GM12878 (cell line): ENCODE measurements at regions of chr12 and their contacts with region 1.

Region 1: GRCh38 chr12:751192-751998 is 984 bp upstream of the WNK1 start:
- DNase-seq: peak; percentile 94
- ATAC-seq: peak; percentile 60
- H3K4me3 ChIP-seq: peak overlapping the region; percentile 75
- H3K27ac ChIP-seq: peak overlapping the region; percentile 79
- H3K4me1 ChIP-seq: no peaks in the 10 kb centered on the region; the same call in 1 of the 2 replicates
- H3K27me3 ChIP-seq: no peaks in the 10 kb centered on the region
- CTCF ChIP-seq: peak; percentile 73 to 84 (median 78)
- EP300 ChIP-seq: no peak
- POLR2A ChIP-seq: peak; percentile 89
- RAD21 ChIP-seq: peak; percentile 76

Region 2: GRCh38 chr12:622416-622815 is 129.0 kb before region 1 on chr12:
- CTCF ChIA-PET with region 1: interaction called, 6 read pairs
- POLR2A ChIA-PET with region 1: no interaction called
- RAD21 ChIA-PET with region 1: interaction called, 65 read pairs
- SMC1A ChIA-PET with region 1: interaction called, 71 read pairs
- in situ Hi-C with region 1: no loop called
- intact Hi-C with region 1: no loop called
- DNase-seq: no peak
- ATAC-seq: peak; percentile 49
- H3K4me3 ChIP-seq: no peak overlapping the region
- H3K27ac ChIP-seq: no peak overlapping the region
- H3K4me1 ChIP-seq: peaks cover 7% of the 10 kb centered on the region; the same call in 1 of the 2 replicates
- H3K27me3 ChIP-seq: no peaks in the 10 kb centered on the region
- CTCF ChIP-seq: no peak
- EP300 ChIP-seq: no peak
- POLR2A ChIP-seq: no peak
- RAD21 ChIP-seq: no peak

Region 3: GRCh38 chr12:642633-643474 is 108.5 kb before region 1 on chr12:
- CTCF ChIA-PET with region 1: interaction called, 3 read pairs
- POLR2A ChIA-PET with region 1: interaction called, 18 read pairs
- RAD21 ChIA-PET with region 1: interaction called, 24 read pairs
- SMC1A ChIA-PET with region 1: interaction called, 10 read pairs
- in situ Hi-C with region 1: no loop called
- intact Hi-C with region 1: no loop called
- DNase-seq: no peak
- ATAC-seq: peak; percentile 82
- H3K4me3 ChIP-seq: peak overlapping the region; percentile 82
- H3K27ac ChIP-seq: peak overlapping the region; percentile 86
- H3K4me1 ChIP-seq: peaks cover 57% of the 10 kb centered on the region
- H3K27me3 ChIP-seq: no peaks in the 10 kb centered on the region
- CTCF ChIP-seq: peak; percentile 20 to 68 (median 34)
- EP300 ChIP-seq: 0 out of 4 replicates have a peak, but pooled peaks of 1 of the 2 experiments have one; percentile 11
- POLR2A ChIP-seq: peak; percentile 83
- RAD21 ChIP-seq: peak; percentile 21

Region 4: GRCh38 chr12:674272-674781 is 77.1 kb before region 1 on chr12:
- CTCF ChIA-PET with region 1: interaction called, 123 read pairs
- POLR2A ChIA-PET with region 1: interaction called, 118 read pairs
- RAD21 ChIA-PET with region 1: interaction called, 396 read pairs
- SMC1A ChIA-PET with region 1: interaction called, 194 read pairs
- in situ Hi-C with region 1: loop called (anchors 5 kb)
- intact Hi-C with region 1: loop called (anchors 1 kb)
- DNase-seq: peak; percentile 100
- ATAC-seq: peak; percentile 84
- H3K4me3 ChIP-seq: peak overlapping the region; percentile 61; the same call in 1 of the 2 replicates
- H3K27ac ChIP-seq: peak overlapping the region; percentile 100
- H3K4me1 ChIP-seq: peaks cover 57% of the 10 kb centered on the region
- H3K27me3 ChIP-seq: no peaks in the 10 kb centered on the region
- CTCF ChIP-seq: no peak
- EP300 ChIP-seq: peak; percentile 81 to 88
- POLR2A ChIP-seq: peak; percentile 83
- RAD21 ChIP-seq: peak; percentile 16; the same call in 1 of the 2 replicates

Region 5: DNA sequence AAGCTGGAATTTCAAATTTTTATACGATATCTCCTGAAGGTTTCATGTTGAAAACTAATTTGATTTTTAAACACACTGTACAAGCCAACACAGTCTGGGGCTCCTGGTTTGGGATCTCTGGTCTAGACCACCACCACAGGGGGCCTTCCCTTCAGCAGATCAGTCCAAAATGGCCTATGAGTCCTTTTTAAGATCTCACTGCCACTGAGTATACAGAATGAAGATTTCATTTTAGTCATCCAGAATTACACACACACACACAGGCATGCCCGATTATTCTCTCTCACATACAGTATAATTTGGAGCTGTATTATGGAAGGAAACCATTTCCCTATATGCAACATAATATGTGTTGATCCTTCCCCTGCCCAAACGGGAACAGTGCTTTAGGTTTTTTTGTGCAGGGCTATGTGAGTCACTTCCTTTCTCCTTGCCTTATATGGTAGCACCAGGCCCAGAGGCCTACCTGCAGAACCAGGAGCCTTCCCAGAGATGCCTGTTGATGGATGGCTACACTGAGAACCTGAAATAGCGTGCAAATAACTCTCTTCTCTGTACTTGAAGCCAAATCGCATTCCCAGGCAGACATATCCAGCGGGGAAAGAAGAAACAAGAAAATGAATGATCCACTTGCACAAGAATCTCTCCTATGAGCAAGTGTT is 27.1 kb before region 1 on chr12:
- CTCF ChIA-PET with region 1: interaction called, 28 read pairs
- POLR2A ChIA-PET with region 1: interaction called, 38 read pairs
- RAD21 ChIA-PET with region 1: interaction called, 50 read pairs
- SMC1A ChIA-PET with region 1: interaction called, 72 read pairs
- in situ Hi-C with region 1: no loop called
- intact Hi-C with region 1: loop called (anchors 2 kb)
- DNase-seq: no peak
- ATAC-seq: peak; percentile 66
- H3K4me3 ChIP-seq: no peak overlapping the region
- H3K27ac ChIP-seq: peak overlapping the region; percentile 46; the same call in 1 of the 2 replicates
- H3K4me1 ChIP-seq: peaks cover 36% of the 10 kb centered on the region
- H3K27me3 ChIP-seq: no peaks in the 10 kb centered on the region
- CTCF ChIP-seq: no peak
- EP300 ChIP-seq: no peak
- POLR2A ChIP-seq: no peak
- RAD21 ChIP-seq: no peak

Region 6: GRCh38 chr12:789852-790563 is 38.6 kb after region 1 on chr12:
- CTCF ChIA-PET with region 1: interaction called, 4 read pairs
- POLR2A ChIA-PET with region 1: interaction called, 4 read pairs
- RAD21 ChIA-PET with region 1: interaction called, 5 read pairs
- SMC1A ChIA-PET with region 1: interaction called, 7 read pairs
- in situ Hi-C with region 1: no loop called
- intact Hi-C with region 1: loop called (anchors 5 kb)
- DNase-seq: no peak
- ATAC-seq: peak; percentile 71
- H3K4me3 ChIP-seq: no peak overlapping the region
- H3K27ac ChIP-seq: peak overlapping the region; percentile 5; the same call in 1 of the 2 replicates
- H3K4me1 ChIP-seq: peaks cover 20% of the 10 kb centered on the region
- H3K27me3 ChIP-seq: no peaks in the 10 kb centered on the region
- CTCF ChIP-seq: no peak
- EP300 ChIP-seq: no peak
- POLR2A ChIP-seq: no peak
- RAD21 ChIP-seq: no peak

Region 7: GRCh38 chr12:1350055-1350933 is 598.9 kb after region 1 on chr12:
- CTCF ChIA-PET with region 1: no interaction called
- POLR2A ChIA-PET with region 1: no interaction called
- RAD21 ChIA-PET with region 1: no interaction called
- SMC1A ChIA-PET with region 1: no interaction called
- in situ Hi-C with region 1: no loop called
- intact Hi-C with region 1: no loop called
- DNase-seq: no peak
- ATAC-seq: no peak
- H3K4me3 ChIP-seq: no peak overlapping the region
- H3K27ac ChIP-seq: no peak overlapping the region
- H3K4me1 ChIP-seq: no peaks in the 10 kb centered on the region
- H3K27me3 ChIP-seq: no peaks in the 10 kb centered on the region
- CTCF ChIP-seq: no peak
- EP300 ChIP-seq: no peak
- POLR2A ChIP-seq: no peak
- RAD21 ChIP-seq: no peak